ENCODE measurements at regions of chr2 and their contacts with region 1.

Region 1: DNA sequence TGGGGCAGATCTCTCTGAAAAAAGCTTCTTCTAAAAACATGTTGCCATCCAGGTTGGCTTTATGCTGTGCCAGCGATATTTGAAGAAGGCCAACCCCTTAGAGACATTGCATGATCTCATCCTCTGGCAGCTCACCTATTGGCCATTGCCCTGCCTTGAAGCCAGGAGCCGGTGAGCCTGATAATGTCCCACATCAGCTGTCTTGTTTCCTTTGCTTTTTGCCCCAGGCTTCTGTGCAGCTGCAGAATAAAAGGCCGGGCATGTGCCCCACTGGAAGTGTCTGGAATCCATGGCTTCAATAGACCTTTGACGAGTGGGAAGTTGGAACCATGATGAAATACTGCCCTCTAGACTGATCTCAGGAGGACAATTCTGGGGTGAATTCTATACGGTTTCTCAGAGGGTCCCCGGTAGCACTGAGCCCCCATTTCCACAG is 523.5 kb upstream of the ZEB2 start:
- DNase-seq: peak in 9 of 10 donors; percentile 22 to 95 (median 52)

Region 2: DNA sequence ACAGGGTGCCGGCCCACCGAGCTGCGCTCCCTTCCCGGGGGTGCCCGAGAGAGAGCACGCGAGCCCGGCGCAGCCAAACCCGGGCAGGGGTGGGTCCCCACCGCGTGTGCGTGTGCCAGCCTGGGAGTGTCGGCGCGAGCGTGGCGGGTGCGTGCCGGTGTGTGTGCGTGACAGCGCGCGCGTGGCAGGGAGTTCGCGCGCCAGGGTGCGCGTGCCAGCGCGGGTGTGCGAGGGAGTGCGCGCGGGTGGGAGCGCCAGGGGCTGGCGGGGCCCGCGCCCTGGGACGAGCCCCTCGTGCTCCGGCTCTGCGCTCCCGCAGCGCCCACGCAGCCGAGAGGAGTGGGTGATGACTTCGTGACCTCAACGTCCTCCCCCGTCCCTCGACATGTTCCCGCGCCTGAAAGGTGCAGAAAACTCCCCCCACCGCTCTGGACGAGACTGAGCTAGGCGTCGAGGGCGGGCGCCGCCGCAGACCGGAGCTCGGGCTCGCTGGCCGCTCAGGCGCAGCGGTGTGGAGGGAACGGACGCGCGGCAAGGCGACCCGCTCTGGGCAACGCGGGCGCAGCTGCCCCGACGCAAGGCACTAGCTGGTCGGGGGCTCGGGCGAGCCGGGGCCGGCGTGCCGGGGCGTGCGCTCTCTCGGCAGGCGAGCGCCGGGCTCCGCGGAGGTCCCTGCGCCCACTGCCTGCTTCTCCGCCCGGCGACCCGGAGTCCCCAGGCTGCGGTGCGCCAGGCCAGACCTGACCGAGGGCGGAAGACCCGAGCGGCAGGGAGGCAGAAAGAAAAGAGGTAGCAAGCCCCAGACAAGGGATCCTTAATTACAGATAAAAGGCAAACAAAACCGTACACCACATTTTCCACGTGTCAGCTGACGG is 1106.3 kb before region 1 on chr2:
- intact Hi-C with region 1: loop called (anchors 10 kb)
- DNase-seq: peak; percentile 23 to 94 (median 64)

Region 3: DNA sequence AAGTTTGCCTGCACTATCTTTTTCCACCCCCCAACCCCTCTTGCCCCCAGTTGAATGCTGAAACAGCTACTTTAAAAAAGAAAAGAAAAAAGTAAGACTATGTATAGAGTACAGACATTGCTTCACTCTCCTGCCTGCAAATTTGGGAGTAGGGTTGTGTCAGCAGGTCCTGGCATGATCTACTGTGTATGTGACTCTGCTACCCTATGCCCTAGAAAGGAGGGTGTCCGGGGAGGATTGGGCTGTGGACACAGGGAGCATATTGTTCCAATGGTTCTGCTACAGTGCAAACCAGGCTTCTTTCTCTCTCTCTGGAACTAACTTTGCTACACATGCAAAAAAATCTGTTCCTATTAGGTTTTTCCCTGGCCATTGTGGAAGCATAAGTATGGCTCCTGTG is 513.6 kb before region 1 on chr2:
- intact Hi-C with region 1: loop called (anchors 5 kb)
- DNase-seq: no peak